Heart left ventricle (tissue), 16 donors: ENCODE measurements at regions of chr7 and their contacts with region 1.

Region 1: GRCh38 chr7:29189743-29190201 is 4.8 kb upstream of the CHN2 start:
- DNase-seq: peak; percentile 51 to 77 (median 60)
- ATAC-seq: peak; percentile 56 to 76 (median 66)
- H3K4me3 ChIP-seq: no peak overlapping the region
- H3K27ac ChIP-seq: no peak overlapping the region
- H3K4me1 ChIP-seq: peaks cover 0 to 21% (median 2%) of the 10 kb centered on the region in 12 donors
- H3K27me3 ChIP-seq: peaks cover 0 to 10% (median 0%) of the 10 kb centered on the region in 9 donors
- CTCF ChIP-seq: peak; percentile 69 to 86 (median 78)
- POLR2A ChIP-seq: no peak

Region 2: GRCh38 chr7:28926871-28927597 is 262.7 kb before region 1 on chr7:
- intact Hi-C with region 1: loop called in 6 of 10 experiments (anchors 5 to 10 kb)
- DNase-seq: peak; percentile 76 to 82 (median 79)
- ATAC-seq: peak; percentile 78 to 95 (median 94)
- H3K4me3 ChIP-seq: peak overlapping the region; percentile 8 to 64 (median 52)
- H3K27ac ChIP-seq: peak overlapping the region in 11 of 12 donors; percentile 15 to 63 (median 49)
- H3K4me1 ChIP-seq: peaks cover 0 to 22% (median 15%) of the 10 kb centered on the region in 12 donors
- H3K27me3 ChIP-seq: peaks cover 0 to 8% (median 0%) of the 10 kb centered on the region in 9 donors
- CTCF ChIP-seq: peak; percentile 72 to 90 (median 84)
- POLR2A ChIP-seq: no peak

Region 3: GRCh38 chr7:29113384-29114103 is 76.2 kb before region 1 on chr7:
- intact Hi-C with region 1: loop called in 2 of 10 experiments (anchors 5 kb)
- DNase-seq: no peak
- ATAC-seq: peak; percentile 23 to 60 (median 34)
- H3K4me3 ChIP-seq: no peak overlapping the region
- H3K27ac ChIP-seq: no peak overlapping the region
- H3K4me1 ChIP-seq: peaks cover 0 to 48% (median 10%) of the 10 kb centered on the region in 12 donors
- H3K27me3 ChIP-seq: no peaks in the 10 kb centered on the region
- CTCF ChIP-seq: peak in 10 of 12 donors; percentile 5 to 41 (median 24)
- POLR2A ChIP-seq: no peak

Region 4: DNA sequence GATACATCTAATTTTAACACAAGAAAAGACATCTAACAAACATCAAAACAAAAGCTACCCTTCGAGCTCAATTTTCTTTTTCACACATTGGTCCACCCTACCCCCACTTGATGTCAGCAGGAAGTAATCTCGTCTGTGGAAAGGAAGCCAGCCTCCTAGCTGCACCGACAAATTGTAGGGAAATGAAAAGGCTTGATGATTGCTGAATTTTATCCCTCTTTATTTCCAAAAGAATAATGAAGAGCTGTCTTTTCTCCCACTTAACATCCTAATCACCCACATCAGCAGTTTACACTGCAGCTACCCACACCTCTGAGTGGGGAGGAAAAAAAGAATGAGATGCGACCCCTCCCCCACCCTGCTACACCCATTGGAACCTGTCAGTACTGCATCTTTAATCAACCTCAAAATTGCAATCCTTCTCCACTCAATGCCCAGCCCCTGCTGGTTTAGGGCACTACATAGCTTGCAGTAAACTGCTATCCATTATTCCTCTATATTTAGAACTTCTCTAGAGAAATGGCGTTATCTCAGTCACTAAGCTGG is 32.8 kb before region 1 on chr7:
- intact Hi-C with region 1: no loop called
- DNase-seq: no peak
- ATAC-seq: peak; percentile 39 to 64 (median 62)
- H3K4me3 ChIP-seq: no peak overlapping the region
- H3K27ac ChIP-seq: peak overlapping the region in 10 of 12 donors; percentile 8 to 69 (median 49)
- H3K4me1 ChIP-seq: peaks cover 0 to 20% (median 8%) of the 10 kb centered on the region in 12 donors
- H3K27me3 ChIP-seq: no peaks in the 10 kb centered on the region
- CTCF ChIP-seq: no peak
- POLR2A ChIP-seq: no peak

Region 5: GRCh38 chr7:29265208-29265923 is 75.6 kb after region 1 on chr7:
- intact Hi-C with region 1: no loop called
- DNase-seq: no peak
- ATAC-seq: peak; percentile 56 to 79 (median 64)
- H3K4me3 ChIP-seq: no peak overlapping the region
- H3K27ac ChIP-seq: no peak overlapping the region
- H3K4me1 ChIP-seq: peaks cover 0 to 6% (median 0%) of the 10 kb centered on the region in 12 donors
- H3K27me3 ChIP-seq: no peaks in the 10 kb centered on the region
- CTCF ChIP-seq: no peak
- POLR2A ChIP-seq: no peak

Region 6: DNA sequence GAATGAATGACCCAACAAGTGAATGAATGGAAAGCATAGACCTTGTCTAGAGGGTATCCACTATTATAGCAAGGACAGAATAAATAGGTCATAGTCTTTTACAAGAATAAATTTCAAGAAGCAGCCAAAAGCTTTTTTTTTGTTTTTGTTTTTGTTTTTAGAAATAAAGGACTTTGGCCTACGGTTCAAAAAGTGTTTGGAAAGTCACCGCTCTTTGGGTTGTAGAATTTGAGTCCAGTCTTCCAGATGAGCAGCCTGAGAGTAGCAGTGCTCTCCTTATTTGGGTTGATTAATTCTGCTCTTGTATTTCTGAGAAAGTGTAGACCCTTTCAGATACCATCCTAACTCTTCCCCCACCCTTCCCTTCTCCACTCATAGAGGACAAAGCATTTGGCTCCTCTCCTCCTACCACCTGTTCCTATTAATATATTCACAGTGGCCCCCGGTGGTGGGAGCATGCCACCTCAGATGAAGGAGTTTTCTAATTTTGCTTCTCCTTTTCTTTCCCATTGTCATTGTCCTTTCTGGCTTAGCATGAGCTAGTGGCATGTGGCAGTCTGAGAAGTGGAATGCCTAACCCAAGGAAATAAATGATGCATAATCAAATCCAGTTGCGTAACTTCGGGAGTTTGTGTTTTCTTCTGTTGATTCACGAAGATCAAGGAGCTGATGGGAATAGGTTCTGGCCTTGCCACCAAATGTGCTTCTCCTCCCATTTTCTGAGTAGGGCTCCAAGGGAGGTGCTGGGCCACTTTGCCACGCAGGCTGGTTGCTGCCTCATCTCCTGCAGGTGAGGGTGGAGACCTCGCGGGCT is 119.5 kb after region 1 on chr7:
- intact Hi-C with region 1: loop called in 2 of 10 experiments (anchors 10 kb)
- DNase-seq: no peak
- ATAC-seq: no peak
- H3K4me3 ChIP-seq: no peak overlapping the region
- H3K27ac ChIP-seq: no peak overlapping the region
- H3K4me1 ChIP-seq: peaks cover 0 to 14% (median 3%) of the 10 kb centered on the region in 12 donors
- H3K27me3 ChIP-seq: no peaks in the 10 kb centered on the region
- CTCF ChIP-seq: no peak
- POLR2A ChIP-seq: no peak

Region 7: GRCh38 chr7:29345600-29345999 is 155.8 kb after region 1 on chr7:
- intact Hi-C with region 1: loop called in 8 of 10 experiments (anchors 2 to 10 kb)
- DNase-seq: peak in 4 of 5 donors; percentile 18 to 44 (median 38)
- ATAC-seq: peak in 3 of 4 donors; percentile 73 to 80 (median 79)
- H3K4me3 ChIP-seq: no peak overlapping the region
- H3K27ac ChIP-seq: no peak overlapping the region
- H3K4me1 ChIP-seq: peaks cover 0 to 17% (median 2%) of the 10 kb centered on the region in 12 donors
- H3K27me3 ChIP-seq: no peaks in the 10 kb centered on the region
- CTCF ChIP-seq: peak; percentile 22 to 65 (median 50)
- POLR2A ChIP-seq: no peak

Region 8: DNA sequence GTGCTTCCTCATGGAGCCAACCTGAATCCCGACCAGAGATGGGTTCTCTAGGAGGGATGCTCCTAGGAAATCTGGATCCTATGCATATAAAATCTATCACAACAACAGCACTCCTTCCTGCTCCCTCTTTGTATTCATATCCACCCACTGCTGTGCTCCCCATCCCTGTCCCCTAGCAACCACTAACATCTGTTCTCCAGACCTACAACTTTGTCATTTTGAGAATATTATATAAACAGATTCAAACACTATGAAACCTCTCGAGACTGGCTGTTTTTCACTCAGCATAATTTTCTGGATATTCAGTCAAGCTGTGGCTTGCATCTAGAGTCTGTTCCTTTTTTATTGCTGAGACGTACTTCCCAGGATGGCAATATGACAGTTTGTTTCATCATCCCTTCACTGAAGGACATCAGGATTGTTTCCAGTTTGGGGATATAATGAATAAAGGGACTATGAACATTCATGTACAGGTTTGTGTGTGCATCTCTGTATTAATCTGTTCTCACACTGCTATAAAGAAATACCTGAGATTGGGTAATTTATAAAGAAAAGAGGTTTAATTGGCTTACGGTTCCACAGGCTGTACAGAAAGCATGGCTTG is 337.8 kb after region 1 on chr7:
- intact Hi-C with region 1: no loop called
- DNase-seq: no peak
- ATAC-seq: no peak
- H3K4me3 ChIP-seq: no peak overlapping the region
- H3K27ac ChIP-seq: no peak overlapping the region
- H3K4me1 ChIP-seq: no peaks in the 10 kb centered on the region
- H3K27me3 ChIP-seq: no peaks in the 10 kb centered on the region
- CTCF ChIP-seq: no peak
- POLR2A ChIP-seq: no peak